HEK293 (cell line): ENCODE measurements at regions of chr17 and their contacts with region 1.

Region 1: DNA sequence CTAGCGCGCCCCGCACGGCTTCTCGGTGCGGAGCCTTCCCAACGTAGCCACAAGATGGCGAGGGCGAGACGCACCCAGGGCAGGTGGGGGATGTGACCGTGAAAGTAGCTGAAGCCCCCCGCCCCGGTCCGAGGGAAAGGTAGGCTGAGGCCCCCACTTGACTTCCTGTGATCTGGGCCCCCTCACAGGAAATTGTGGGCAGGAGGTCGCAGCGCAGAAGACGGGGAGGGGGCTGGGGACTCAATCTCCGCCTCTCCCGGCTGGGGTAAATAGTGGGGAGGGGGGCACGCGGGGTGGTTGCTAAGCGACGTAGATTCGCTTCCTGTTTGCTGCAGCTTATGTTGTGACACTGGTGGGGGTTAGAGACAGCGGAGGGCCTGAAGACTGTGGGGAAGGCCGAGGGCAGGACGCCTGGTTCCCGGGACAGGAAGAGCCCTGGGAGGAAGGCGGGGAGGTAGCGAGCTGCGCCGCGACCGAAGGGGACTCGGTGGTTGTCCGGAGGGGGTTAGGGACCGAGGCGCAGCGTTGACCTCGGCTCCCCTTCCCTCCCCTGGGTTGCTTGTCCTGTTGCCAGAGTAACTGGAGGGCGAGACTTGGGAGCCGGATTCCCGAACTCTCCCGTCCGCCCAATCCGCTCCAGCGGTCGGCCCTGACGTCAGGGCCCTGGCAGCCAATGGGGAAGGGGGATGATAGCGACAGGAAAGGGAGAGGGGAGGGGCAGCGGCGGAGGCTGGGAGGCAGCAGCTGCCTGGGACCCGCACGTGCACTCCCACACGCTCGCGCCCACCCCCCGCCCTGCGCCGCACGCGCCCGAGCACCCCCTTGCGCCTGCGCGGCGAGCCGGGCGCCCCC is 1.2 kb downstream of the KDM6B start:
- H3K4me3 ChIP-seq: peak overlapping the region; percentile 60
- H3K27ac ChIP-seq: peak overlapping the region; percentile 100
- H3K4me1 ChIP-seq: peaks cover 22% of the 10 kb centered on the region
- CTCF ChIP-seq: peak; percentile 97

Region 2: DNA sequence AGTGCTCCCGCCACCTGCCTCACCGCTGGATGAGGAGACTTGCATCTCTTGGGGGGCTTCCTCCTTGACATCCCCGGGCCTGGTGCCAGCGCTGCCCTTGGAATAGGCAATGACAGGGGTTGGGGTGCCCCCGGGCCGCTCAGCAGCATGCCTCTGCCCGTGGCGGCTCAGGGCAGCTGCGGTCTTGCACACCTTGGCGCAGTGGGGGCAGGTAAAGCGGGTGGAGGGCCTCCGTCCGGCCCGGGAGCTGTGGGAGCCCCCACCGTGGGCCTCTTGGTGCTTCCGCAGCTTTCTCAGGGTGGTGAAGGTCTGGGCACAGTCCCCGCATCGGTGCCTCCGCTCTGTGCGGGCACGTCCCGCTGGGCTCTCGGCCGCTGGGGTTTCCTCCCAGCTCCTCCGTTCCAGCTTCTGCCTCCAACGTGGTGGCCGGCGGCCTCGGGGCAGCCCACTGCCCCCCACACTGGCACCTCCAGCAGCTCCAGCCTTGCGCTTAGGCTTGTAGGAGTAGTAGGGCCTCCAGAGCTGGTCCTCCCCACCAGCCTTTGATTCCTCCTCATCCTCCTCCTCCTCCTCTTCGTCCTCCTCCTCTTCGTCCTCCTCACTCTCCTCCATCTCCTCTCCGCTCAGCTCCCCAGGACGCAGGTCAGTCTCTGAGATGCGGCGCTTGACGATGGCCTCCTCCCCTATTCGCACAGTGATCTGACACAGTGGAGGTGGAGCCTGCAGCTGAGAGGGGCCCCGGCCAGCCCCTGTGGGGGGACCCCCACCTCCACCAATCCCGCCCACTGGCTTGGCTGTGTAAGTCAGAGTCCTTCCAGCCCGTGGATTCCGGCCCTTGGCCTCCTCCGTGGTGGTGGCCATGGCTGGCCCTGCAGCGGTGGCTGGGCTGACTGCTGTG is 372.5 kb before region 1 on chr17:
- CTCF ChIA-PET with region 1: no interaction called
- POLR2A ChIA-PET with region 1: no interaction called
- H3K4me3 ChIP-seq: no peak overlapping the region
- H3K27ac ChIP-seq: no peak overlapping the region
- H3K4me1 ChIP-seq: no peaks in the 10 kb centered on the region
- CTCF ChIP-seq: no peak

Region 3: GRCh38 chr17:7548585-7549400 is 286.4 kb before region 1 on chr17 and contains the start of gene TNFSF12:
- CTCF ChIA-PET with region 1: no interaction called
- POLR2A ChIA-PET with region 1: no interaction called
- H3K4me3 ChIP-seq: peak within 1 kb of the TSS; percentile 52
- H3K27ac ChIP-seq: no peak within 1 kb of the TSS; the same call in 1 of the 2 replicates
- H3K4me1 ChIP-seq: peaks cover 3% of the 10 kb centered on the region; the same call in 1 of the 2 replicates
- CTCF ChIP-seq: peak; percentile 58; the same call in 1 of the 2 replicates

Region 4: DNA sequence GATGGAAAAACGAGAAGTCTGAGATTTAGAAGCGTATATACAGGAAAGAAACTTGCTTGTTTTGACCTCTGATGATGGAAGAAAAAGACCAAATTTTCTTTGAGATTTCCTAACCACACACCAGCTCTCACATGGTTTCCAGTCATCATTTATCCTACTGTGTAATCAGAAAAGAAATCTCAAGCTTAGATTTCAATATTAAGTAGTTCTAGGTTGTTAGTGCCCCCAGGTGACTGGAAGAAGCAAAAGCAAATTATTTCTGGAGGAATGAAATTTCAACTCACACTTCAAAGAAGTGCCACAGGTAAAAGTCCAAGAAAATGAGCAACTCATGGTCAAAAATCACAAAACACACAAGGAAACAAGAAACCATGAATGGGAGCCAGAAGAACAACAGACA is 53.0 kb before region 1 on chr17:
- CTCF ChIA-PET with region 1: no interaction called
- POLR2A ChIA-PET with region 1: no interaction called
- H3K4me3 ChIP-seq: no peak overlapping the region
- H3K27ac ChIP-seq: no peak overlapping the region
- H3K4me1 ChIP-seq: no peaks in the 10 kb centered on the region
- CTCF ChIP-seq: 0 out of 2 replicates have a peak, but pooled peaks have one; percentile 11

Region 5: DNA sequence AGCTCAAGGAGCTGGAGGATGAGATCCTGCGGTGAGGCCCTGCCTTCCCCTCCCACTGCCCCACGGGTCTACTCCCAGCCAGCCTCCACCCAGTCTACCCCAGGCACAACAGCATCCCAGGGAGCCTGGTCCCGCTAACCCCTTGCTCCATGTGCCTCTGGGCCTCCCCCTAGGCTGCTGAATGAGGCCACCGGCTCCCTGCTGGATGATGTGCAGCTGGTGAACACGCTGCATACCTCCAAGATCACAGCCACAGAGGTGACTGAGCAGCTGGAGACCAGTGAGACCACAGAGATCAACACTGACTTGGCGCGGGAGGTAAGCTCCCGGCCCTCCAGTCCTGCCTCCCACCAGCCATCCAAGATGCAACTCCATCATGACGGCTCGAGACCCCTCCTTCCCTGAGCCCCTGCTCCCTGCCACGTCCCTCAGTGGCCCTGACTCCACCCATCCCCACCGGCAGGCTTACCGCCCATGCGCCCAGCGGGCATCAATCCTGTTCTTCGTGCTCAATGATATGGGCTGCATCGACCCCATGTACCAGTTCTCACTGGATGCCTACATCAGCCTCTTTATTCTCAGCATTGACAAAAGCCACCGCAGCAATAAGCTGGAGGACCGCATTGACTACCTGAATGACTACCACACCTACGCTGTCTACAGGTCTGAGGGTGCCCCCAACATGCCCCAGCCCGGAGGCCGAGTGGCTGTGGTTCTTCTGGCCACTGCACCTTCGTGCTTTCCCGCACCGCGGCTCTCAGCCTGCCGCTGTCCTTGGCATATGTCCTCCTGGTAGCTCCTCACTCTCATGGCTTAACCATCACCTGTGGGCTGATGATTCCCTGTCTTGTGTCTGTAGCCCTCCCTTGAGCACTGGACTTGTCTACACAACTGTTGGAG is 16.2 kb before region 1 on chr17:
- CTCF ChIA-PET with region 1: interaction called, 13 read pairs
- POLR2A ChIA-PET with region 1: interaction called, 3 read pairs
- H3K4me3 ChIP-seq: no peak overlapping the region
- H3K27ac ChIP-seq: no peak overlapping the region
- H3K4me1 ChIP-seq: no peaks in the 10 kb centered on the region
- CTCF ChIP-seq: no peak